ENCODE measurements at regions of chr21 and their contacts with region 1.

Region 1: DNA sequence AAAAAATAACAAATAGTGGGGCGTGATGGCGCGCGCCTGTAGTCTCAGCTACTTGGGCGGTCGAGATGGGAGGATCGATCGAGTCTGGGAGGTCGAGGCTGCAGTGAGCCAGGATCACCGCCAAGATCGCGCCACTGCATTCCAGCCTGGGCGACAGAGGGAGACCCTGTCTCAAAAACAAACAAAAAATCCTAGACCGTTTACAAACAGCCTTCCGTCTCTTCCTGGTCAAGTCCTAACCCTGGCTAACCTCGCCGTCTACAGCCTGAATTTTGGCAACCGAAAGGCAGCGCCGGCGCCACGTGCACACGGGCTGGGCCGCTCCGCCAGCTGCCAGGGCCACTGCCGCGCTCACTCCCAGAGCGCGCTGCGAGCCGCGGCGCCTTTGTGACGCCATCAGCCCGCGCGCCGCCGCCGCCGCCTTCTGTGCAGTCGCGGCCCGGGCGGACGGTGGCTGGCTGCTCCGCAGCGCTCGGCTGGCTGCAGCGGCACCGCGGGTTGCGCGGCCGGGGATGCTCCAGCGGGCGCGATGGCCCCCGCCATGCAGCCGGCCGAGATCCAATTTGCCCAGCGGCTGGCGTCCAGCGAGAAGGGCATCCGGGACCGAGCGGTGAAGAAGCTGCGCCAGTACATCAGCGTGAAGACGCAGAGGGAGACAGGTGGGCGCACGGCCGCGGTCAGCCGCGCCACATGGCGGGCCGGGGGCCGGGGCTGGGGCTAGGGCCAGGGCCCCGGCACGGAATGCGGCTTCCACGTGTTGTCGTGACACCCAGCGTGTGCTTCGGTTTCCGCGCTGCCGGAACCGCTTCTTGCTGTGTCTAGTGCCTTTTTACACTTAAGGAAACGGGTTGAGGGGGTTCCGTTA is at the starts of genes HSF2BP and RRP1B:
- DNase-seq: peak; percentile 77
- H3K4me3 Mint-ChIP-seq: peak within 1 kb of the TSS; percentile 97
- H3K27ac Mint-ChIP-seq: peak within 1 kb of the TSS; percentile 90
- H3K4me1 Mint-ChIP-seq: peaks cover 21% of the 10 kb centered on the region
- H3K27me3 Mint-ChIP-seq: no peaks in the 10 kb centered on the region
- CTCF ChIP-seq: no peak
- total RNA-seq, gene HSF2BP: 5.3 and 6.8 TPM in 2 replicates
- total RNA-seq, gene RRP1B: 35.3 and 39.8 TPM in 2 replicates

Region 2: GRCh38 chr21:43718872-43719747 is 59.7 kb after region 1 on chr21 and contains the start of gene PDXK:
- CTCF ChIA-PET with region 1: no interaction called
- POLR2A ChIA-PET with region 1: interaction called, 13 read pairs
- intact Hi-C with region 1: no loop called
- DNase-seq: peak; percentile 82
- H3K4me3 Mint-ChIP-seq: peak within 1 kb of the TSS; percentile 85
- H3K27ac Mint-ChIP-seq: peak within 1 kb of the TSS; percentile 74
- H3K4me1 Mint-ChIP-seq: peaks cover 15% of the 10 kb centered on the region
- H3K27me3 Mint-ChIP-seq: no peaks in the 10 kb centered on the region
- CTCF ChIP-seq: no peak
- total RNA-seq, gene PDXK: 194 and 210 TPM in 2 replicates

Region 3: DNA sequence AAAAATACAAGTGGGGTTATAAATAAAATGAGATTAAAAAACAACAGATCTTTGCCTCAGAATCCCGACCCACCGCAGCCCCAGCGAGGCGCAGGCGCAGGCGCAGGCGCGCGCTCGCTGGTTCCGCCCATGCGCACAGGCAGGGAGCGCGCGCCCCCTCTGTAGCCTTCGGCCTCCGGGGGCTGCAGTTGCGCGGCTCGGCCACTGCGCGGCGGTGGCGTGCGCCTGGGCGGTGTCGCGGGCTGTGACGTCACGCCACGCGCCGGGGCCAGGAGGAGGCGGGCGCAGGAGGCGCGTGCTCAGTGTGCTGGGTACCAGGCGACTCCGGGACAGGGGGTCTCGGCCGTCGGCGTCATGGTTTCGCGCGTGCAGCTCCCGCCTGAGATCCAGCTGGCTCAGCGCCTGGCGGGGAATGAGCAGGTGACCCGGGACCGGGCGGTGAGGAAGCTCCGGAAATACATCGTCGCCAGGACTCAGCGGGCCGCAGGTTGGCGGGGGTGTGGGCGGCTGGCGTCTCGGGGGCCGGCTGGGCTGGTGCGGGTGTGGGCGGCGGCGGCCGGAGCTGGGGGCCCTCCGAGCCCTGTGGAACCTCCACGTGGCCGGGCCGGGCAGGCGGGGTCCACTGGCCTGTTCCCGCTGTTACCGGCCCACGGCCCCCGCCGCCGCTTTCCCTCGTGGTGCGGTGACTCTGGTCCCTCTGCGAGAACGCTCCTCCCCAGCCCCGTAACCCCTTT is 130.1 kb after region 1 on chr21 and contains the start of gene RRP1:
- CTCF ChIA-PET with region 1: no interaction called
- POLR2A ChIA-PET with region 1: interaction called, 4 read pairs
- intact Hi-C with region 1: loop called (anchors 1 kb)
- DNase-seq: peak; percentile 85
- H3K4me3 Mint-ChIP-seq: peak within 1 kb of the TSS; percentile 91
- H3K27ac Mint-ChIP-seq: peak within 1 kb of the TSS; percentile 84
- H3K4me1 Mint-ChIP-seq: peaks cover 6% of the 10 kb centered on the region
- H3K27me3 Mint-ChIP-seq: no peaks in the 10 kb centered on the region
- CTCF ChIP-seq: peak; percentile 93
- total RNA-seq, gene RRP1: 43.7 and 56.0 TPM in 2 replicates